ENCODE measurements at regions of chr5 and their contacts with region 1.

Region 1: DNA sequence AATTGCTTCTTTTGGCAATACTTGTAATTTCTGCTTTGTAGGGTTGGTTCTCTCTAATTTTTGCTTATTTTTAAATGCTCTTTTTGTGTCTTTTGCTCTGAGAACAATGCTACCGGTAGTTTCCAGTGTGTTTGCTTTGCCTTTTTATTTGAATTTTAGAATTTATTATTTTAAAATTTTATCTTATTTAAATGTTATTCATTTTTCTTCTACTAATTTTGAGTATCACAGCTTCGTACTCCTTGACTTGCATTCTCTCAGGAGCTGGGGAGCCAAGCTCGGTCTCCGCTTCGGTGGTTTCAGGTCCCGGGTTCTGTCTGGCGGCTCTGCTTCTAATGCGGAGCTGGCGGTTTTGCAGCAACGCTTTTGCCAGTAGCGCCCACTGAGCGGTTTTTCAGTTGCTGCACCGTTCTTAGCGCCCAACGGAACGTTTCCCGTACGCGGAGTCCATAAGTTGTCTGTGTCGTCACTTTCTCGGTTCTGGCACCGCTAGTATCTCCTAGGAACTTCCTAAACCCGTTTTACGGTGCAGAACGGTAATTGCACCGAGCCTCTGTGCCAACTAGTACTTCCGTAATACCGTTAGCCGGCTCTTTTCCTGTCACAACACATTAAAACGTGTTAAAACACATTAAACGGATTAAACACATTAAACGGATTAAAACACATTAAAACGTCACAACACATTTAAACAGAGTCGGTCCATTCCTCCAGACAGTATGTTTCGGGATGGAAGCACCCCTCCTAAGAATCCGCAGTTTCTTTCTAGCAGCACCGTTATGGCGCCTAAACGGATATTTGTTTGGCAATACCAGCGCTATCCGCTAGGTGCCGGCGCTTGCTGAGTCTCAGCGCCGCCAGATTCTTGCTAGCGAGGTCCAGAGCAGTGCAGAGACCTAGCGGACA is 45.6 kb downstream of the ANXA2R start:
- DNase-seq: no peak
- H3K4me3 ChIP-seq: peak overlapping the region; percentile 69
- CTCF ChIP-seq: peak; percentile 83

Region 2: DNA sequence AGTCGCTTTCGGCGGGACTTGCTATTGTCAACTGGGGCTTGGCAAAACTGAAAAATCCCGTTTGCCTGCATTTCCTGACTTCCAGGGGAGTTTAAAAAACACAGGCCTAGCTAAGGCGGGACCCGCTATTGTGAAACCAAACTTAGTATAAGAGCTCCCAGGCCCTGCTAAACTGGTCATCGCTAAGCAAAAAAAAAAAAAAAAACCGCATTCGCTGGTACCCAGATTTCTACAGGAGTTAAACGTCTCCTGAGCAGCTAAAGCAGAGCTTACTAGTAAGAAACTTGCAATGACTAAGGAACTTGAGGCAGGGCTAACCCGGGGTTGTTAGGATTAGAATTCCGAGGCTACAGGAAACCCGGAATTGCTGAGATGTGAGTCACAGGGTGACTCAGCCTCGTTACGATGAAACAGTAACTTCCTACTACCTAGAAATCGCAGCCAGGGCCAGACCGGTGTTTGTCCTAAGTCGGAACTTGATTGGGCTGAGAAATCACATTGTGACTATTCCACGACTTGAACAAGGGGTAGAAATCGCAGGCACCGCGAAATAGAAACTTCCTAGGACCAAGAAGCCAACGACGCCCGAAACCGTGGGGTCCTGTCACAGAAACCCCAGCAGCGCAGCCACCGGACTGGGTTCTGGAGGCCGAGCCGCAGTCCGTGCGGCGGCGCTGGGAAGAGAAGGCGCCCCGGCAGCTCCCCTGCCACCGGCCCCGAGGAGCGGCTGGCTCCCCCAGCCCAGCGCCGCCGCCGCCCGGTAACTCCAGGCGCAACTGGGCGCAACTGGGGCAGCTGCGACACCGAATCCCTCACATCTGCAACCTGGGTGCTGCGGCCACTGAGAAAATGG is 43.8 kb before region 1 on chr5:
- CTCF ChIA-PET with region 1: interaction called, 11 read pairs
- POLR2A ChIA-PET with region 1: interaction called, 19 read pairs
- DNase-seq: peak; percentile 99
- H3K4me3 ChIP-seq: peak overlapping the region; percentile 64
- CTCF ChIP-seq: no peak

Measured in AG04449 (cell line).